ENCODE measurements at regions of chr2 and their contacts with region 1.

Region 1: DNA sequence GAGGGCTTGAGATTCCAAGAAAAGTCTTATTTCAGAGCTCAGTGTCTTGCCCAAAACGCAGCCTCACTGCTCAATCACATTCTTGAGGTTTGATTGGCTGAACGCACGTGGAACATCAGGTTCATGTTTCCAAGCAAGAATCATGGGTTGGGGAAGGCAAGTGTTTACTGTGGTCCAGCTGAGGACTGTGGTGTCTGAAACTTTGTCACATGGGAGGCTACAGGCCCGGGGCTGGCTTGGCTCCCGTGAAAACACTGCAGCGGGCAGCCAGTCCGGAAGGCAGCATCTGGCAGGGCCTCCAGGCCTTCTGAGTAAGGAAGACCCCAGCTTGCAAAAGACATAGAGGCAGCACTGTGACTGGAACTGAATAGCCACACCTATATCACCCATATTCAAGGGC is 84.7 kb downstream of the POLR1A start:
- DNase-seq: no peak
- H3K4me3 ChIP-seq: no peak overlapping the region
- CTCF ChIP-seq: no peak

Region 2: GRCh38 chr2:86006524-86006923 is 14.5 kb before region 1 on chr2:
- CTCF ChIA-PET with region 1: no interaction called
- POLR2A ChIA-PET with region 1: no interaction called
- DNase-seq: no peak
- H3K4me3 ChIP-seq: no peak overlapping the region
- CTCF ChIP-seq: no peak

Region 3: GRCh38 chr2:86035883-86036668 is 15.1 kb after region 1 on chr2:
- CTCF ChIA-PET with region 1: interaction called, 12 read pairs
- POLR2A ChIA-PET with region 1: no interaction called
- DNase-seq: no peak
- H3K4me3 ChIP-seq: no peak overlapping the region
- CTCF ChIP-seq: peak; percentile 51

Measured in AG04449 (cell line).